ENCODE measurements at regions of chrX and their contacts with region 1.

Region 1: DNA sequence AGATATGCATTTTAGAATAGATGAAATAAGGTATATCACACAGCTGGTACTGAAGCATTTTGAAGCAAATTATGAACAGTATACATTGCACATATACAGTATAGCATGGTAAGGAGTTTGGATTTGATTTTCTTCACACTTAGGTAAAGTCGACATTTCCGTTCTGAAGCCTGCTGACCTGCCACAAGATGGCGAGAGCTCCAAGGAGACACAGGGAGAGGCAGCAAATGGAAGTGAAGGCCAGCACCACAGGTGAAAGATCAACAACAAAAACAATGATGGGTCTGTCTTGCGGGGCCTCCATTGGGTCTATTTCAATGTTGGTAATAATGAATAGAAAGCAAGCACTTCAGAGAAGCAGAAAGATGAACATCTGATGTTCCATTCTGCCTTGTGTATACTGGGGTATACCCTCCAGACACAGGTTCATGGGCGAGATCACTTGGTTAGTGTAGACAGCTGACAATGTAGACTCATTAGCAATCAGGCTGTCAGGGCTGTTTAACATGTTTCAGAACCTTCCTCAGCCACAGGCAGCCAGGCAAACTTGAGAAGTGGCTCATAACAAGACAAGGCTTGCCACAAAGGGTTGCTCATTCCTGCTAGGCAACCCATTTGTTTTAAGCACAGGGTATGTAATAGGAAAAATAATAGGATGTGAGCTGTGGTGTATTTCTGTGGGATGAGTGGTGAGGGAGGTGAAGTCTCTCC is 21.4 kb upstream of the NOX1 start:
- DNase-seq: peak; percentile 69
- ATAC-seq: peak; percentile 78
- H3K4me3 ChIP-seq: no peak overlapping the region
- H3K27ac ChIP-seq: no peak overlapping the region
- H3K4me1 ChIP-seq: 0 out of 2 replicates have a peak, but pooled peaks cover 3% of the 10 kb centered on the region
- H3K27me3 ChIP-seq: no peaks in the 10 kb centered on the region
- CTCF ChIP-seq: peak; percentile 77

Region 2: DNA sequence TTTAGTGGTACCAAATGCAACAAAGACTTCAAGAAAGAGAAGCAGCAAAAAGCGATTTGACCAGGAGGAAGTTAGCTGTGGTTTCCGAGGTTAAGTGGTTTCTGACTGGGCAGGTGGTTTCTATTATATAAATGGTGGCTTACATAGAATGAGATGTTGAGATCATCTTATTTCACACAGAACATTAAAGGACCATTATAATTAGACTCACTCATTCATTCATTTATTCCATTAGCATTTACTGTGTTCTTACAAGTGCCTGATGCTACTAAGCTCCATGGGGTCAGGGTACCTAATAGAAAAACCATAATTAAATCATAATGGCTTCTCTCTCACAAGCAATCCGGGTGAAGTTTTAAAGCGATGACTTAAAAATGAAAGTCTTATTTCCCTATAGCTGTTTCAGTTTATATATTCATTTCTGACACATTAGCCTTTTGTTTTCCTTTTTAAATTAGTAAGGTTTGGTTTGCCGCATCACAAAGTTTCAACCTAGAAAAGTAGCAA is 269.5 kb before region 1 on chrX:
- CTCF ChIA-PET with region 1: no interaction called
- POLR2A ChIA-PET with region 1: no interaction called
- intact Hi-C with region 1: no loop called
- DNase-seq: no peak
- ATAC-seq: no peak
- H3K4me3 ChIP-seq: no peak overlapping the region
- H3K27ac ChIP-seq: no peak overlapping the region
- H3K4me1 ChIP-seq: 0 out of 2 replicates have a peak, but pooled peaks cover 4% of the 10 kb centered on the region
- H3K27me3 ChIP-seq: no peaks in the 10 kb centered on the region
- CTCF ChIP-seq: no peak

Region 3: GRCh38 chrX:100994352-100995281 is 99.1 kb after region 1 on chrX:
- CTCF ChIA-PET with region 1: no interaction called
- POLR2A ChIA-PET with region 1: no interaction called
- intact Hi-C with region 1: loop called (anchors 10 kb)
- DNase-seq: peak; percentile 76
- ATAC-seq: peak; percentile 93
- H3K4me3 ChIP-seq: no peak overlapping the region; the same call in 1 of the 2 replicates
- H3K27ac ChIP-seq: peak overlapping the region; percentile 58
- H3K4me1 ChIP-seq: peaks cover 21% of the 10 kb centered on the region
- H3K27me3 ChIP-seq: no peaks in the 10 kb centered on the region
- CTCF ChIP-seq: no peak

Region 4: DNA sequence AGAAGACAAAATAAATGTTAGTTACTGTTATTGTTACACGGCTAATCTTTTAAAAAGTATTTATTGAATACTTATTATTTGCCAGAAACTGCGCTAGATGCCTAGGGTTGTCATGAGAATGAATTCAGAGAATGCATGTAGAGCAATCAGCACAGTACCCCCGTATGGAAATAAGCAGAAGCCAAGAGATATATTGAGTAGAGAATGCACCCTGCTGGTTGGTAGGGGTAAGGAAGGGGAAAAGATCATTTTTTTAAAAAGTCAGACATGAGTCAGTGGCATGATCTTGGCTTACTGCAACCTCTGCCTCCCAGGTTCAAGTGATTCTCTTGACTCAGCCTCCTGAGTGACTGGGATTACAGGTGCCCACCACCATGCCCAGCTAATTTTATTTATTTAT is 311.0 kb after region 1 on chrX:
- CTCF ChIA-PET with region 1: no interaction called
- POLR2A ChIA-PET with region 1: no interaction called
- intact Hi-C with region 1: loop called (anchors 1 kb)
- DNase-seq: peak; percentile 58
- ATAC-seq: peak; percentile 90
- H3K4me3 ChIP-seq: no peak overlapping the region
- H3K27ac ChIP-seq: no peak overlapping the region
- H3K4me1 ChIP-seq: no peaks in the 10 kb centered on the region
- H3K27me3 ChIP-seq: no peaks in the 10 kb centered on the region
- CTCF ChIP-seq: peak; percentile 57

Region 5: GRCh38 chrX:101287402-101287801 is 391.9 kb after region 1 on chrX:
- CTCF ChIA-PET with region 1: no interaction called
- POLR2A ChIA-PET with region 1: no interaction called
- intact Hi-C with region 1: loop called (anchors 1 kb)
- DNase-seq: peak; percentile 75
- ATAC-seq: peak; percentile 57; the same call in 1 of the 2 replicates
- H3K4me3 ChIP-seq: no peak overlapping the region
- H3K27ac ChIP-seq: no peak overlapping the region
- H3K4me1 ChIP-seq: no peaks in the 10 kb centered on the region
- H3K27me3 ChIP-seq: no peaks in the 10 kb centered on the region
- CTCF ChIP-seq: peak; percentile 61

Measured in PC-3 (cell line).